Activated T-helper 2 cell treated with anti-CD3 and anti-CD28 coated beads, Interferon-gamma antibody, Interleukin-2, Interleukin-4, amounts not matched to agents 10 μg/mL and 5 μg/mL and 100 μg/mL, durations not matched to agents 14 hours and 24 hours and 36 hours (primary cell): ENCODE measurements at regions of chr1 and their contacts with region 1.

Region 1: GRCh38 chr1:67685067-67685557 is at the start of gene GADD45A:
- DNase-seq: peak; percentile 96
- H3K4me3 Mint-ChIP-seq: peak within 1 kb of the TSS; percentile 98
- H3K27ac Mint-ChIP-seq: peak within 1 kb of the TSS; percentile 99
- H3K4me1 Mint-ChIP-seq: peaks cover 39% of the 10 kb centered on the region
- H3K27me3 Mint-ChIP-seq: no peaks in the 10 kb centered on the region
- total RNA-seq, gene GADD45A: 30.3 and 33.5 TPM in 2 replicates

Region 2: GRCh38 chr1:67053785-67054772 is 631.0 kb before region 1 on chr1 and contains the start of gene SLC35D1:
- intact Hi-C with region 1: loop called (anchors 5 kb)
- DNase-seq: peak; percentile 71
- H3K4me3 Mint-ChIP-seq: peak within 1 kb of the TSS; percentile 92
- H3K27ac Mint-ChIP-seq: peak within 1 kb of the TSS; percentile 93
- H3K4me1 Mint-ChIP-seq: peaks cover 25% of the 10 kb centered on the region
- H3K27me3 Mint-ChIP-seq: peaks cover 7% of the 10 kb centered on the region
- total RNA-seq, gene SLC35D1: 14.5 and 14.8 TPM in 2 replicates

Region 3: GRCh38 chr1:67332653-67333529 is 352.2 kb before region 1 on chr1:
- intact Hi-C with region 1: loop called (anchors 1 kb)
- DNase-seq: no peak
- H3K4me3 Mint-ChIP-seq: peak overlapping the region; percentile 45
- H3K27ac Mint-ChIP-seq: peak overlapping the region; percentile 91
- H3K4me1 Mint-ChIP-seq: peaks cover 68% of the 10 kb centered on the region
- H3K27me3 Mint-ChIP-seq: no peaks in the 10 kb centered on the region

Region 4: DNA sequence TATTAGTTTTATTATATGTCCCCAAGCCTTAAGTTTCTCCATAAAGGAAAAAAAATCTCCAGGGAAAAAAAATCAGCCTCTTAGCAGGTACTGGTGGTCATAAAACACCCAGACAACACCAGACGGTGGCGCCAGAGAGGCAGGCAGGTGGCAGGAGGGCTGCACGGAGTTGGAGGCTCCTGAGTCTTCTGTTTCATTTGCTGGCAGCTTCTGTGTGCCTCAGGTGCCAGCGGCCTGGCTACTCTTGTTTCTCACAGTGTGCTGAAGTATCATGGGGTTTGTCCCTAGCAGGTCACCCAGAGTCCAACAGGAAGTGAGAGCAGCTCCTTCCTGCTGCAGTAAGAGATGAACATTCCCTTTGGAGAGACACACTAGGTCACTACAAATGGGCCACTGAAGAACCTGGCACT is 123.4 kb before region 1 on chr1:
- intact Hi-C with region 1: loop called (anchors 1 kb)
- DNase-seq: peak; percentile 67
- H3K4me3 Mint-ChIP-seq: no peak overlapping the region
- H3K27ac Mint-ChIP-seq: no peak overlapping the region
- H3K4me1 Mint-ChIP-seq: peaks cover 4% of the 10 kb centered on the region
- H3K27me3 Mint-ChIP-seq: peaks cover 6% of the 10 kb centered on the region

Region 5: GRCh38 chr1:67700692-67701410 is 15.7 kb after region 1 on chr1:
- intact Hi-C with region 1: loop called (anchors 1 kb)
- DNase-seq: no peak
- H3K4me3 Mint-ChIP-seq: no peak overlapping the region
- H3K27ac Mint-ChIP-seq: peak overlapping the region; percentile 83
- H3K4me1 Mint-ChIP-seq: peaks cover 22% of the 10 kb centered on the region
- H3K27me3 Mint-ChIP-seq: peaks cover 4% of the 10 kb centered on the region